HEK293T (cell line): ENCODE measurements at regions of chr9 and their contacts with region 1.

Region 1: DNA sequence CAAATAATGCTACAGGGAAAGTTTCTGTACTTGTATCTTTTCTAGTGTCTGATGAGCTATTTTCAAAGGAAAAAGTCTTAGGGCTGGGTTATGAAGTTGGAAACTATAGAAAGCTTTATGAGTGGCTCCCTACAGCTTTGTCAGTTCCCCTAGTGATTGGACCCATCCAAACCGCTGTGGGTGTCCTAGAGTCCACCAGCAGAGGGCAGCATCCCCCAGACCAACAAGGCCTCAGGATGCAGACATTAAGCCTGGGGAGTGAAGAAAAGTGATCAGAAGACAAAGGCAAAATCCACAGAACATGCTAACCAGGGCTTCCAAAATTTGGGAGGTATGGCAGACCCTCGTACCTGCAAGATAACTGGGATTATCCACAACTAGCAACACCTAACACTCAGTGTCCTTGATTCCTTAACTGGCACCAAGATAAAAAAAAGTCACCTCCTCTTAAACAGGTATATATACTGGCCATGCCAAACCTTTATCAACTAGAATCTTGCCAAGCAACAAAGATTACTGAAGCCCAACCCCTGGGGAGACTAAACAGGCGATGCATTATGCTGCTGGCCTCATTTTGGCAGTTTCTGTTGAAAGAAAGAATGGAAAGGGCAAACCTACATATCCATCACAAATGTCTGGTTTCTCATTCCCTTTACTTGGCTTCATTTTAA is 110.4 kb upstream of the NR5A1 start:
- DNase-seq: peak; percentile 81

Region 2: GRCh38 chr9:124593651-124594058 is 24.0 kb before region 1 on chr9:
- CTCF ChIA-PET with region 1: interaction called, 11 read pairs
- POLR2A ChIA-PET with region 1: no interaction called
- DNase-seq: no peak

Region 3: DNA sequence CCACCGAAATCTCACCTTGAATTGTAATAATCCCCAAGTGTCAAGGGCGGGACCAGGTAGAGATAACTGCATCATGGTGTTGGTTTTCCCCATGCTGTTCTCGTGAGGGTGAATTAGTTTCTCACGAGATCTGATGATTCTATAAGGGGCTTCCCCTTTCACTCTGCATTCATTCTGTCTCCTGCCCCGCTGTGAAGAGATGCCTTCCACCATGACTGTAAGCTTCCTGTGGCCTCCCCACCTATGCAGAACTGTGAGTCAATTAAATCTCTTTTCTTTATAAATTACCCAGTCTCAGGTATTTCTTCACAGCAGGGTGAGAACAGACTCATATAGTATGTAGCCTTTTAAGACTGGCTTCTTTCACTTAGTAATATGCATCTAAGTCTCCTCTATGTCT is 17.7 kb after region 1 on chr9:
- CTCF ChIA-PET with region 1: no interaction called
- POLR2A ChIA-PET with region 1: no interaction called
- DNase-seq: no peak

Region 4: DNA sequence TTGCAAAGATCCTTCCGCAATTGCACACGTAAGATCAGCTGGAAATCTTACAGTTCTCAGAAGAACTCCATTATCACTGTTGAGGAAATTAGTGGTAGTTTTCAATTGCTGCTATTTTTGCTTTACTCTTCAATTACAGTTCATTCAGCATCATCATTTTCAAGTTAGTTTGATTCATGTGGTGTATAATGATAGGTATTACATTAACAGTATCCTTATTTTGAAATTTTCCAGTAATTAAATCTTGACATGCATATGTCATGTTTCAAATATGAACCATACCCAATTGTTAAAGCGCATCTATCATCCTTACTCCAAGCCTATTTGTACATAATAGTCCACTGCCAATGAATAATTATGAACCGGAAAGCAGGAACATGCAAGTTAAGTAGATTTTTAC is 93.2 kb after region 1 on chr9:
- CTCF ChIA-PET with region 1: interaction called, 40 read pairs
- POLR2A ChIA-PET with region 1: interaction called, 3 read pairs
- DNase-seq: no peak